Activated T-helper 1 cell treated with anti-CD3 and anti-CD28 coated beads, Interleukin-12 subunit alpha, Interleukin-12 subunit beta, Interleukin-2, Interleukin-4 antibody, amounts not matched to agents 30 ng/mL and 10 ng/mL and 1 ng/mL, durations not matched to agents 14 hours and 24 hours and 36 hours (primary cell): ENCODE measurements at regions of chr12 and their contacts with region 1.

Region 1: GRCh38 chr12:25320123-25321006 is 69.6 kb upstream of the KRAS start:
- DNase-seq: no peak
- H3K4me3 Mint-ChIP-seq: no peak overlapping the region
- H3K27ac Mint-ChIP-seq: peak overlapping the region; percentile 53
- H3K4me1 Mint-ChIP-seq: peaks cover 50% of the 10 kb centered on the region
- H3K27me3 Mint-ChIP-seq: peaks cover 9% of the 10 kb centered on the region

Region 2: GRCh38 chr12:25195056-25195971 is 125.1 kb before region 1 on chr12 and contains the starts of genes DNAI7 and ETFRF1:
- intact Hi-C with region 1: loop called (anchors 2 kb)
- DNase-seq: peak; percentile 92
- H3K4me3 Mint-ChIP-seq: peak within 1 kb of the TSS; percentile 98
- H3K27ac Mint-ChIP-seq: peak within 1 kb of the TSS; percentile 95
- H3K4me1 Mint-ChIP-seq: peaks cover 23% of the 10 kb centered on the region
- H3K27me3 Mint-ChIP-seq: peaks cover 2% of the 10 kb centered on the region
- total RNA-seq, gene DNAI7: 0.23 TPM in 1 of 2 replicates, not detected in the other
- total RNA-seq, gene ETFRF1: 9.7 and 10.4 TPM in 2 replicates

Region 3: DNA sequence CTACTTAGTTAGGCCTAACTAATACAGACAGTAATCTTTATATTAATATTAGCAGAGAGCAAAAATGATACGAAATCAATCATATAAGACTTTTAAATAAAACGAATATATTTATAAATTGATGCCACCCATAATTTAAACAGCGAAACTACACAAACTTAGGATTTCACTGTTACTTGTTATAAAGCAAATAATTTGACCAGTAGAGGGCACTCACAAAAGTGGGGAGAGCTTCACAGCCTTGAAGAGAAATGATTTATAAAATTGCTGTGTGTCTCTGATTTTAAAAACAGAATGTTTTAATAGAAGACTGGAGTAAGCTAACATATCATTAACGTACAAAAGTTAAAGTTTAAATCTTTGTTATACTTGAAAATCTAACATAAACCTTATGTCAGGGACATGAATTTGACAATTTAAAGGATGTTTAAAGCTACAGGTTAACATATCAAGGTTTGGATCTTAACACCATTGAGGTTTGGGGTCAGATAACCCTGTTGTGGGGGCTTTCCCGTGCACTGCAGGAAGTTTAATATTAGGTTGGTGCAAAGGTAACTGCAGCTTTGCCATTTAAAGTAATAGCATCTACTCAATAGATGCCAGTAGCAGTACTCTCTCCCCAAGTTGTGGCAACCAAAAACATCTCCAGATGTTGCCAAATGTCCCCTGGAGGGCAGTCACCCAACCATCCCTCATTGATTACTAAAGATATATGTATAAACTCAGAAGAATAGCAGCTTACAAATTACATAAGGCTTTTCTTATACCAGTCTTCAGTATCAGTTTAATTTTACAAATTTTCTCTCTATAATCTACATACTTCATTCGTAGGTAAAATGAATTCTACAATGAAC is 79.0 kb before region 1 on chr12:
- intact Hi-C with region 1: loop called (anchors 2 kb)
- DNase-seq: no peak
- H3K4me3 Mint-ChIP-seq: no peak overlapping the region
- H3K27ac Mint-ChIP-seq: no peak overlapping the region
- H3K4me1 Mint-ChIP-seq: peaks cover 29% of the 10 kb centered on the region
- H3K27me3 Mint-ChIP-seq: no peaks in the 10 kb centered on the region

Region 4: GRCh38 chr12:25250744-25251730 is 69.3 kb before region 1 on chr12 and contains the start of gene KRAS:
- intact Hi-C with region 1: loop called (anchors 1 kb)
- DNase-seq: peak; percentile 89
- H3K4me3 Mint-ChIP-seq: peak within 1 kb of the TSS; percentile 90
- H3K27ac Mint-ChIP-seq: peak within 1 kb of the TSS; percentile 96
- H3K4me1 Mint-ChIP-seq: peaks cover 45% of the 10 kb centered on the region
- H3K27me3 Mint-ChIP-seq: peaks cover 10% of the 10 kb centered on the region
- total RNA-seq, gene KRAS: 43.1 and 43.3 TPM in 2 replicates

Region 5: GRCh38 chr12:25276199-25276937 is 44.0 kb before region 1 on chr12:
- intact Hi-C with region 1: loop called (anchors 5 kb)
- DNase-seq: no peak
- H3K4me3 Mint-ChIP-seq: no peak overlapping the region
- H3K27ac Mint-ChIP-seq: peak overlapping the region; percentile 2
- H3K4me1 Mint-ChIP-seq: peaks cover 24% of the 10 kb centered on the region
- H3K27me3 Mint-ChIP-seq: peaks cover 2% of the 10 kb centered on the region

Region 6: DNA sequence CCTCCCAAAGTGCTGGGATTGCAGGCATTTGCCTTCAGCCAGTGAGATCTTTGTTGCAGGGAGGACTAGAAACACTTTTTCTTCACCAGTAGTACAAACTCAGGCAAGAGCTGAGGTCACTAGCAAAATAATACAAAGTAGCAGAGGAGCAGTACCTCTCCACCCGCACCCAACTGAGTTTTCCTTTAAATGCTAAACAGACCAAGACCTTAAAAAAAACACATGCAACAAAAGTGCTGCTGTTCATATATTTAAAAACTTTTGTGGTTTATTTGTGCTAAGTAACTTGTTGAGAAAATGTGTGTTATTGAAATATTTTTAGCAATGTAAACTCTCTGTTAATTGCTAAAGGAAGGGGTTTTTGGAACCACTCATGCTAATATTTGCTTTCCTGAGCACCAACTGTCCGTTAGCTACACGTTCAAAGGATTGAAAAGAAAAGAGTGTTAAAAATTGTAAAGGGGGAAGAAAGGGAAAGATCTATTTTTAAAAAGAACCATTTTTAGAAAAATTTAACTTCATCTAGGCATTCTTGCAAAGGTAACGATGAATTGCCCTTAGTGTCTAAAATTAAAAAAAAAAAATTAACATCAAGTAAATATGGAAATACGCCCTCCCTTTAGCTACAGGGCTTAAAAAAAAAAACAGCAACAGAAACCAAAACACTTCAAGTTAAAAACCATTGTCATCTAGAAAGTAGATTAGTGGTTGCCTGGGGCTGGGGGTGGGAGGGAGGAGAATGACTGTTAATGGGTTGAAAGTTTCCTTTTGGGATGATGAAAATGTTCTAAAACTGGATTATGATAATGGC is 44.4 kb after region 1 on chr12:
- intact Hi-C with region 1: loop called (anchors 1 kb)
- DNase-seq: no peak
- H3K4me3 Mint-ChIP-seq: peak overlapping the region; percentile 36
- H3K27ac Mint-ChIP-seq: peak overlapping the region; percentile 94
- H3K4me1 Mint-ChIP-seq: peaks cover 45% of the 10 kb centered on the region
- H3K27me3 Mint-ChIP-seq: peaks cover 5% of the 10 kb centered on the region

Region 7: DNA sequence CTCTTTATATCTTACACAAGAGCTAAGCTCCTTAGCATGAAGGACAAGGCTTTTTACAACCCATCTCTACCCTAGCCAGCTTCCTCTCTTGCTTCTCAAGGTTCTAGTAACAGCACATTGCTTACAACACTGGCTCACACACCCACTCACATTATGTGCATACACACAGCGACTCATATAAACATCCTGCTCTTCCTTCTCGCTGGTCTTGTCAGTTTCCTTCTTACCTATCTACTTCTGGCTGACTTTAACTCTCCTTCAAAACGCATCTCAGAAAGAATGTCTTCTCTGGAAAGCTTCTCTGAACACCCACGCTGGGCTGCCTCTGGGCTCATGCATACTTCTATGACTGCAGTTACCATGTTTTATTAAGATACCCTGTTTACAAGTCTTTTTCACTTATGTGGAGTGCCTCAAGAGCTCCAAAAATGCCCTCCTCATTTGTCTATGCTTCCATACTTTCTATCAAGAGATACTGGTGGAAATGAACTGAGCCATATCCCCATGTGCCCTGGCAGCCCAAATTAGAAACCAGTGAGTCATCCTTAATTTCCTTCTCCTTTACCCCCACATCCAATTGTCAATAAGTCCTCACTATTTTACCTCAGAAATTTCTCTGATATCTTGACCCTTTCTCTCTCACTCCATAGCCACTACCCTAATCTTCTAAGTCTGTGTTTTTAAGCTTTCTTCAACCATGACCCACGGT is 57.3 kb after region 1 on chr12:
- intact Hi-C with region 1: loop called (anchors 1 kb)
- DNase-seq: peak; percentile 37
- H3K4me3 Mint-ChIP-seq: peak overlapping the region; percentile 46
- H3K27ac Mint-ChIP-seq: peak overlapping the region; percentile 93
- H3K4me1 Mint-ChIP-seq: peaks cover 78% of the 10 kb centered on the region
- H3K27me3 Mint-ChIP-seq: no peaks in the 10 kb centered on the region

Region 8: GRCh38 chr12:25914607-25915006 is 594.2 kb after region 1 on chr12:
- intact Hi-C with region 1: no loop called
- DNase-seq: no peak
- H3K4me3 Mint-ChIP-seq: no peak overlapping the region
- H3K27ac Mint-ChIP-seq: no peak overlapping the region
- H3K4me1 Mint-ChIP-seq: no peaks in the 10 kb centered on the region
- H3K27me3 Mint-ChIP-seq: no peaks in the 10 kb centered on the region